ENCODE measurements at regions of chr1 and their contacts with region 1.

Region 1: GRCh38 chr1:184163674-184164465 is 112.3 kb downstream of the TSEN15 start:
- DNase-seq: peak; percentile 31
- H3K4me3 Mint-ChIP-seq: no peak overlapping the region
- H3K27ac Mint-ChIP-seq: no peak overlapping the region
- H3K4me1 Mint-ChIP-seq: peaks cover 14% of the 10 kb centered on the region
- H3K27me3 Mint-ChIP-seq: peaks cover 1% of the 10 kb centered on the region

Region 2: GRCh38 chr1:183655562-183656075 is 508.3 kb before region 1 on chr1:
- CTCF ChIA-PET with region 1: no interaction called
- POLR2A ChIA-PET with region 1: no interaction called
- intact Hi-C with region 1: loop called (anchors 2 kb)
- DNase-seq: peak; percentile 81
- H3K4me3 Mint-ChIP-seq: no peak overlapping the region
- H3K27ac Mint-ChIP-seq: no peak overlapping the region
- H3K4me1 Mint-ChIP-seq: peaks cover 33% of the 10 kb centered on the region
- H3K27me3 Mint-ChIP-seq: no peaks in the 10 kb centered on the region

Region 3: DNA sequence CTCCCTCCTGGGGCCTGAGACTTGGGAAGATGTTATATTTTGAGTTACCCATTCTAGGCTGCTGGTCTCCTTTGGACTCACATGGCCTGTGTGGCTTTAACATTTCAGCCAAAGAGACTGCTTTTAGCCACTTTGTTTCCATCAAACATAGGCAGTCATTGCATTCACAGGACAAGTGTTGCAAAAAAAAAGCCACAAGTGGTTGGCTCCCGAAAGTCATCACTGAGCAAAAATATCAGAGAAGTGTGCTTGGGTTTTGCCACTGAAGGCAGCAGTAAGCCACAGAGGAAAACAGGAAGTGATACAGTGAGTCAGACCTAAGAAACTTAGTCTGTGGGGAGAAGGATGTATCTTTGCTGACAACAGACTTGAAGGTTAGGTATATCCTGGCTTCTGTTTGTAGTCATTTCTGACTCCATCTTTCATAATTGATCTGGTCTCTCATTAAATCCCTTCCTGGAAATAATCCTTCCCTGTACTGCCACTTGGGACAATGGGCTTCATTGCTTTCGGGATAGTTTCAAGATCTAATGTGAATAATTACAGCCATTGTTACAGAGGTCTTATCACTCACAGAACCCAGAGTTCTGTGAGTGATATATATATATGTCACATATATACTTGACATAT is 207.2 kb before region 1 on chr1:
- CTCF ChIA-PET with region 1: no interaction called
- POLR2A ChIA-PET with region 1: interaction called, 7 read pairs
- intact Hi-C with region 1: loop called (anchors 1 kb)
- DNase-seq: peak; percentile 72
- H3K4me3 Mint-ChIP-seq: no peak overlapping the region
- H3K27ac Mint-ChIP-seq: no peak overlapping the region
- H3K4me1 Mint-ChIP-seq: peaks cover 17% of the 10 kb centered on the region
- H3K27me3 Mint-ChIP-seq: no peaks in the 10 kb centered on the region

Region 4: GRCh38 chr1:184075055-184076029 is 88.5 kb before region 1 on chr1:
- CTCF ChIA-PET with region 1: no interaction called
- POLR2A ChIA-PET with region 1: no interaction called
- intact Hi-C with region 1: loop called (anchors 5 kb)
- DNase-seq: no peak
- H3K4me3 Mint-ChIP-seq: no peak overlapping the region
- H3K27ac Mint-ChIP-seq: no peak overlapping the region
- H3K4me1 Mint-ChIP-seq: peaks cover 11% of the 10 kb centered on the region
- H3K27me3 Mint-ChIP-seq: no peaks in the 10 kb centered on the region

Region 5: DNA sequence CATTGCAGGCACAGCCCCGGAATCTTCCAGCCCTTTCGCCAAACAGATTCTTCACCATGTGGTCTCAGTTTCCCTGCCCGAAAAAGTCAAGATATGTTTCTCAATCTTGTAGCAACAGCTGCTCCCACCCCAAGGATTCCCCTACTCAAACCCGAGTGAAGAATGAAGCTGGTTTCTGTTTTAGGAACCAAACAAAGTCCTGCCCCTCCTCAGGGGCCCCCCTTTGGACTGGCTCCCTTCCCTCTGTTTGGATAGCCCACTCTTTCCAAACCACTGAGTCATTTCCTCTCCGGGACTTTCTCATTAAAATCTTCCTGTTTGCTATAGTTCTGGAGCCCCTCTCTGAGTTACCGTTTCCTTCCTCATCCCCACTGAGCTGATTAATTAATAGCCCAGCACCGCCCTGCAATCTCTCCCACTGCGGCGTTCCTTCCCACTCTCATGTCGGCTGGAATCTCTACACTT is 11.4 kb before region 1 on chr1:
- CTCF ChIA-PET with region 1: no interaction called
- POLR2A ChIA-PET with region 1: no interaction called
- intact Hi-C with region 1: no loop called
- DNase-seq: no peak
- H3K4me3 Mint-ChIP-seq: peak overlapping the region; percentile 20
- H3K27ac Mint-ChIP-seq: no peak overlapping the region
- H3K4me1 Mint-ChIP-seq: peaks cover 12% of the 10 kb centered on the region
- H3K27me3 Mint-ChIP-seq: peaks cover 34% of the 10 kb centered on the region

Region 6: DNA sequence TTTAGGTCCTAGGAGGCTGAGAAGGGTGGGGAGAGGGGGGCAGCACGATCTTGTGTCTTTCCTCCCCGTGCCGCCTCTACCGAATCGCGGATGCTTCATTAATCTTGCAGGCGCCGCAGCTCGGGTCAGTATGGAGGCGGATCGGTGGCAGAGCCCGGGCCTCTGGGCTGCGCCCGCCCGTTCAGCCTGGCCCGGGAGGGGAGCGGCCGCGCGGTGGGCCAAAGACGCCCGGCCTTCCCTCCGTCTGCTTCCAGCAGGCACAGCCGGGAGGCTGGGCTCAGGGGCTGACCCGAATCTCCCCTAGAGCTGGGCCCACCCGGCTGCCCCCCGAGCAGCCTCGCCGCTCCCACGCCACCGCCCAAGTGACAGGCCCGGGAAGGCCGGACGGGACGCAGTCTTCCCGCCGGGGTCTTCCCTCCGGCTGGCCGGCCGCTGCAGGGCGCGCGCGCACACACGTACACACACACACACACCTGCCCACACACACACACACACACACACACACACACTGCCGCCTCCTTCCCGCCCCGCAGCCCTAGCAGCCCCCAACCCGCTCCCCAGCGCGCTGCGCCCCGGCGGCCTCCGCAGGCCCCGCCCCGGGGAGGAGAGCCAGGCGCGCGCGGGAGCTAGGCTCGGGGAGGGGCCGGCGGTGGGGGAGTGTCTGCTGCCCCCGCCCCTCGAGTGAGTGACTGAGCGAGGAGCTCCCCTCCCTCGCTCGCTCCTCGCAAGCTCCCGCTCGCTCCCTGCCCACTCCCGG is 222.6 kb after region 1 on chr1 and contains the start of gene C1orf21:
- CTCF ChIA-PET with region 1: no interaction called
- POLR2A ChIA-PET with region 1: no interaction called
- intact Hi-C with region 1: loop called (anchors 2 kb)
- DNase-seq: peak; percentile 82
- H3K4me3 Mint-ChIP-seq: peak within 1 kb of the TSS; percentile 74
- H3K27ac Mint-ChIP-seq: no peak within 1 kb of the TSS
- H3K4me1 Mint-ChIP-seq: peaks cover 15% of the 10 kb centered on the region
- H3K27me3 Mint-ChIP-seq: peaks cover 69% of the 10 kb centered on the region
- total RNA-seq, gene C1orf21: 1.9 to 2.2 TPM

Region 7: GRCh38 chr1:184892116-184892515 is 728.2 kb after region 1 on chr1:
- CTCF ChIA-PET with region 1: no interaction called
- POLR2A ChIA-PET with region 1: no interaction called
- intact Hi-C with region 1: loop called (anchors 2 kb)
- DNase-seq: peak; percentile 53
- H3K4me3 Mint-ChIP-seq: no peak overlapping the region
- H3K27ac Mint-ChIP-seq: peak overlapping the region; percentile 76
- H3K4me1 Mint-ChIP-seq: peaks cover 58% of the 10 kb centered on the region
- H3K27me3 Mint-ChIP-seq: peaks cover 1% of the 10 kb centered on the region